ENCODE measurements at regions of chr4 and their contacts with region 1.

Region 1: DNA sequence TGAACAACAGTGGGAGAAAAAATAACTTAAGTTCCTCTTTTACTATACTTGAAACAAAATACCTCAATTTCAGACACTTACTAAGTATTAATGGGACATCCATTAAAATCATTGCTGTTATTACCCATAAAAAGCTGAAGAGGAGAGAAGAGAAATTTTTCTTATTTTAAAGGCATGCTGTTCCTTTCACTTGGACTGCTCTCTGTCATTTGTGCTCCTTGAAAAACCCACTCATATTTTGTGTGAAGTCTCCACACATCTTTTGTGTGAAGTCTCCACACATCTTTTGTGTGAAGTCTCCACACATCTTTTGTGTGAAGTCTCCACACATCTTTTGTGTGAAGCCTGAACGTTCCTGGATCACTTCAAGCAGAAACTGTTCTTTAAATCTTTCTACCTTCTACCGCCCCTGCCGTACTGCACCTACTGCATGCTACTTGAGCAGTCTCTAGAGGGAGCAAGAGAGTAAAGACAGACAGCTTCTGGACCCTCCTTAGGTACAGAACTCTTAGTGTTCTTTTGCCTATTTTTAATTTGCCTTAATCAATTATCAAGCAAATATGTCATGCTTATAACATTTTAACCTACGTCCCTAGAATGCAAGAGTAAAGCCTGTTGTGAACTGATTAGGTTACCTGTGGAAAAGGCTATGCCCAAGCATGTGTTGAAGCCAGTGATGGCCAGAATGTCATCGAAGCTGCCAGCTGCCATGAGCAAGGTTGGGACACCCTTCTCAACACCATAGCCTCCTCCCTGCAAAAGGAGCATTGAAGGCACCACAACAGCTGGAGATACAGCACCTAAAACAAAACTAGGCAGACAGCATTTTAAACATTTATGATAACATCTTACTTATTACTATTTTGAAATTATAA is 27.1 kb upstream of the SLC9B1 start:
- DNase-seq: peak; percentile 28 to 47 (median 36)
- H3K4me3 ChIP-seq: no peak overlapping the region
- H3K4me3 Mint-ChIP-seq: no peak overlapping the region
- H3K27ac ChIP-seq: no peak overlapping the region
- H3K27ac Mint-ChIP-seq: no peak overlapping the region
- H3K4me1 ChIP-seq: no peaks in the 10 kb centered on the region
- H3K4me1 Mint-ChIP-seq: peaks cover 2% of the 10 kb centered on the region
- H3K27me3 ChIP-seq: no peaks in the 10 kb centered on the region
- H3K27me3 Mint-ChIP-seq: no peaks in the 10 kb centered on the region
- CTCF ChIP-seq: peak; percentile 90

Region 2: DNA sequence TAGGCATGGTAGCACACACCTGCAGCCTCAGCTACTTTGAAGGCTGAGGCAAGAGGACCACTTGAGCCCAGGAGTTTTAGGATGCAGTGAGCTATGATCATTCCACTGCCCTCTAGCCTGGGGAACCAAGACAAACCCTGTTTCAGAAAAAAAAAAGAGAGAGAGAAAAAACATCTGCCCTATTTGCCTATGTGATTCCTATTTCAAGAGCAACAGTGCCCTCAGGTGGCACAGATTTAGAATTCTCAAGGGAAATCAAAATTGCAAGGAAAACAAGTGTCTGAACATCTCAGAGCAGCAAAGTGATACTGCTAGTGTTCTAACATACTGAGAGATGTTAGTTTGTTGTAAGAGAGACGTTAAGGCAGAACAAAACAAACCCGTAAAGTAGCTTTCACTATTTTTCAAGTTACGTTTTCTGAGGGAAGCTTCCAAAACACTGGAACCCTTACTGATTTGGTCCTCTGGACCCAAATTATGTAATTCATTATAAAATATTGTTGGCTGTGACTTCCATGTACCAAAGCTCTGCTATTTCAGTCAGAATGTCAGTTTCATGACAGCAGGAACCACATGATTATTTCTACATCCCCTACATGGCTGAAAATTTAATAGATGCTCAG is 45.1 kb after region 1 on chr4:
- intact Hi-C with region 1: loop called (anchors 2 to 5 kb)
- DNase-seq: peak; percentile 29 to 43 (median 31)
- H3K4me3 ChIP-seq: no peak overlapping the region
- H3K4me3 Mint-ChIP-seq: no peak overlapping the region
- H3K27ac ChIP-seq: no peak overlapping the region
- H3K27ac Mint-ChIP-seq: no peak overlapping the region
- H3K4me1 ChIP-seq: no peaks in the 10 kb centered on the region
- H3K4me1 Mint-ChIP-seq: peaks cover 6% of the 10 kb centered on the region
- H3K27me3 ChIP-seq: no peaks in the 10 kb centered on the region
- H3K27me3 Mint-ChIP-seq: peaks cover 0 to 2% (median 0%) of the 10 kb centered on the region in 3 donors
- CTCF ChIP-seq: peak; percentile 79